ENCODE measurements at regions of chr12 and their contacts with region 1.

Region 1: GRCh38 chr12:2163172-2163941 is 110.6 kb downstream of the CACNA1C start:
- DNase-seq: peak; percentile 53 to 95
- H3K4me3 ChIP-seq: no peak overlapping the region
- H3K27ac ChIP-seq: peak overlapping the region; percentile 88 to 92
- H3K4me1 ChIP-seq: peaks cover 18 to 43% of the 10 kb centered on the region in 2 donors
- H3K27me3 ChIP-seq: no peaks in the 10 kb centered on the region
- CTCF ChIP-seq: no peak

Region 2: GRCh38 chr12:2084553-2085296 is 78.6 kb before region 1 on chr12:
- intact Hi-C with region 1: loop called (anchors 2 kb)
- DNase-seq: peak; percentile 51 to 88
- H3K4me3 ChIP-seq: no peak overlapping the region
- H3K27ac ChIP-seq: peak overlapping the region; percentile 78 to 85
- H3K4me1 ChIP-seq: peaks cover 11 to 53% of the 10 kb centered on the region in 2 donors
- H3K27me3 ChIP-seq: no peaks in the 10 kb centered on the region
- CTCF ChIP-seq: no peak

Region 3: GRCh38 chr12:2124466-2125023 is 38.8 kb before region 1 on chr12:
- intact Hi-C with region 1: loop called (anchors 5 kb)
- DNase-seq: no peak
- H3K4me3 ChIP-seq: no peak overlapping the region
- H3K27ac ChIP-seq: no peak overlapping the region
- H3K4me1 ChIP-seq: peaks cover 16 to 31% of the 10 kb centered on the region in 2 donors
- H3K27me3 ChIP-seq: no peaks in the 10 kb centered on the region
- CTCF ChIP-seq: no peak

Region 4: GRCh38 chr12:2267703-2268501 is 104.5 kb after region 1 on chr12:
- intact Hi-C with region 1: loop called (anchors 2 kb)
- DNase-seq: peak in 1 of 2 donors; percentile 91
- H3K4me3 ChIP-seq: peak overlapping the region; percentile 2 to 4
- H3K27ac ChIP-seq: peak overlapping the region; percentile 84 to 90
- H3K4me1 ChIP-seq: peaks cover 34 to 60% of the 10 kb centered on the region in 2 donors
- H3K27me3 ChIP-seq: no peaks in the 10 kb centered on the region
- CTCF ChIP-seq: no peak